Left colon (tissue), 2 donors: ENCODE measurements at regions of chr19 and their contacts with region 1.

Region 1: DNA sequence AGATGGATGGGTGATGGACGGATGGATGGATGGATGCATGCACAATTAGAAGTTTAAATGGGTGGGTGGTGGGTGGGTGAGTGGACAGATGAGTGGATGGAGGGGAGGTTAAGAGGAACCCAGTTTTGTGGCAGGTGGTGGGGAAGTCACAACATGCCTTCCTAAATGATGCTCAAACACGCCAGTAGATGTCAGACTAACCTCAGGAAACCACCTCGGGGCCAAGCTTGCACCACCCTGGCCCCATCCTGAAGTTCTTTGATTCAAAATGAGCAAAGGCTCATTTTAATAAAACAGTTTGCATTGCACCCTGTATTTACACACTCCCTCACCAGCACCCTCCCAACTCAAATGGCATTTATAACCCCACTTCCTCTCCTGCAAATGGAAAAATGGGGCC is 91.4 kb upstream of the CACNA1A start:
- DNase-seq: peak in 1 of 2 donors; percentile 31
- ATAC-seq: peak; percentile 90

Region 2: GRCh38 chr19:13727798-13728197 is 130.2 kb after region 1 on chr19:
- intact Hi-C with region 1: loop called in 1 of 2 experiments (anchors 10 kb)
- DNase-seq: no peak
- ATAC-seq: no peak

Region 3: DNA sequence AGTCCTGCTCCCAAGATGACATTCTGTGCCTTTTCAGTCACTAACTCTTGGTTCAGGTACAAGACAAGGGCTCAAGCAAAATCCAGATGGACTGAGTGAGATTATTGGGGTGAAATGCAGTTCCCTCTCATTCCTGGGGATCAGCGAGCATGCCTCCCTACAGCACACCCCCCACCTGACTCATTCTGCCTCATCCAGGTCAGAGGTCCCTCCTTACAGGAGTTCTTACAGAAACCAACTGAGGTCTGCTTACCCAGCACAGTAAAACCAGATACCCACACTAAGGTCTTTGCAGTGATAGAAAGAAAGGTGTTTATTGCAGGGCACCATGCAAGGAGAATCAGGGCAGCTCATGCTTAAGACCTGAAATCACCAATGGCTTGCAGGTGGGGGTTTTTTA is 145.1 kb after region 1 on chr19:
- intact Hi-C with region 1: no loop called
- DNase-seq: no peak
- ATAC-seq: no peak

Region 4: DNA sequence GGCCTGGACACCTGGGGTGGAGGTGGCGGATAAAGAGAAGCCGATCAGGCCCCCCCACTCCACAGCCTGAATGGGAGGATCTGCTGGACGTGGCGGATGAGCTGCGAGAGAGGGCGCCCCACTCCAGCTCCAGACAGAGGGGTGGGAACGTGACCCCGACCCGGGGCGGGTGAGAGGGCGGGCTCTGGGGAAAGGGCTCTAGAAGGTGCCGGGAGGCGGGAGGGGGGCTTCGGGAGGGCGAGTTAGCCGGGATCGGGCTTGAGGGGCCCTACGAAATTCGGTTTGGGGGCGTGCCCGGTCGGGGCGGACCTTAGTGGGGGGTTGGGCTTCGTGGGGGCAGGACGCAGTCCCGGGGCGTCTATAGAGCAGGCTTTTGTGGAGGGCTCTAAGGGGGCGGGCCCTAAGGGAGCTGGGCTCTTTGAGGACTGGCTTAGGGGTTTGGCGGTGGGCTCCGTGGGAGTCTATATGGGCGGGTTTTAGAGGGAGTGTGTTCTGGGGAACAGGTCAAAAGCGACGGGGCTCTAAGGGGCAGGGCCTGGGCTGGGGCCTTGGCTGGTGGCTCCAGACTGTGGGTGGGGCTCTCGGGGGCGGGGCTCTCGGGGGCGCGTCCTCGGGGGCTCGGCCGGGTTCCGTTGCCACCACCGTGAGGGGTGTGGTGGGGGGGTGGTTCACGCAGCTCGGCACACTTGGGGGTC is 275.2 kb after region 1 on chr19:
- intact Hi-C with region 1: loop called in 1 of 2 experiments (anchors 10 kb)
- DNase-seq: peak in 1 of 2 donors; percentile 66
- ATAC-seq: peak; percentile 77

Region 5: GRCh38 chr19:14073261-14073924 is 475.8 kb after region 1 on chr19:
- intact Hi-C with region 1: loop called in 1 of 2 experiments (anchors 10 kb)
- DNase-seq: peak in 1 of 2 donors; percentile 85
- ATAC-seq: peak; percentile 28